ENCODE measurements at regions of chr10 and their contacts with region 1.

Region 1: GRCh38 chr10:78972947-78973900 is 95.5 kb upstream of the ZMIZ1 start:
- DNase-seq: peak; percentile 93
- H3K4me3 Mint-ChIP-seq: peak overlapping the region; percentile 78
- H3K27ac Mint-ChIP-seq: peak overlapping the region; percentile 51
- H3K4me1 Mint-ChIP-seq: peaks cover 36% of the 10 kb centered on the region
- H3K27me3 Mint-ChIP-seq: no peaks in the 10 kb centered on the region
- CTCF ChIP-seq: no peak

Region 2: GRCh38 chr10:78756604-78757349 is 216.4 kb before region 1 on chr10:
- CTCF ChIA-PET with region 1: interaction called, 3 read pairs
- POLR2A ChIA-PET with region 1: no interaction called
- intact Hi-C with region 1: loop called (anchors 1 kb)
- DNase-seq: peak; percentile 98
- H3K4me3 Mint-ChIP-seq: peak overlapping the region; percentile 41
- H3K27ac Mint-ChIP-seq: peak overlapping the region; percentile 74
- H3K4me1 Mint-ChIP-seq: peaks cover 26% of the 10 kb centered on the region
- H3K27me3 Mint-ChIP-seq: peaks cover 26% of the 10 kb centered on the region
- CTCF ChIP-seq: no peak

Region 3: DNA sequence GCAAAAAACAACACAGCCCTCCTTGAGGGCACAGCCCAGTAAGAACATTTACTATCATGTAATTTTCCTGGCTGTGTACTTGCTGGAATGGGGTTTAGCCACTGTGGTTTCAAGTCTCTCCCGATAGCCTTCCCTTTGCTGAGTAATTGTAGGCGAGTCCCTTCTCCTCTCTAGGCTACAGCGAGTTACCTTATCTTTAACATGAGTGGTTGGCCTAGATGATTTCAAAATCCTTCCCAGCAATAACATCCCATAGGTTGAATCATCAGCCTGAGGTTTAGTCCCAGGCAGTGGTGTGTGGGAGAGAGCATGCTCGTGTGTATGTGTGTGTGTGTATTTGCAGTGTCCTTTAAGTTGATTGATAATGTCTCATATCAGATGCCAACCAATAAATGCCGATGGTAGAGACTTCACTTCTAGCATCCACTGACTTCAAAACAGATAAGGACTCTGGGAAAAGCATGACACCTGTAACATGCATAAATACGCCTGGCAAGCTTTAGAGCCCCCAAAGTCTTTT is 47.4 kb before region 1 on chr10:
- CTCF ChIA-PET with region 1: interaction called, 3 read pairs
- POLR2A ChIA-PET with region 1: no interaction called
- intact Hi-C with region 1: loop called (anchors 2 kb)
- DNase-seq: peak; percentile 94
- H3K4me3 Mint-ChIP-seq: no peak overlapping the region
- H3K27ac Mint-ChIP-seq: peak overlapping the region; percentile 42
- H3K4me1 Mint-ChIP-seq: peaks cover 19% of the 10 kb centered on the region
- H3K27me3 Mint-ChIP-seq: no peaks in the 10 kb centered on the region
- CTCF ChIP-seq: no peak

Region 4: DNA sequence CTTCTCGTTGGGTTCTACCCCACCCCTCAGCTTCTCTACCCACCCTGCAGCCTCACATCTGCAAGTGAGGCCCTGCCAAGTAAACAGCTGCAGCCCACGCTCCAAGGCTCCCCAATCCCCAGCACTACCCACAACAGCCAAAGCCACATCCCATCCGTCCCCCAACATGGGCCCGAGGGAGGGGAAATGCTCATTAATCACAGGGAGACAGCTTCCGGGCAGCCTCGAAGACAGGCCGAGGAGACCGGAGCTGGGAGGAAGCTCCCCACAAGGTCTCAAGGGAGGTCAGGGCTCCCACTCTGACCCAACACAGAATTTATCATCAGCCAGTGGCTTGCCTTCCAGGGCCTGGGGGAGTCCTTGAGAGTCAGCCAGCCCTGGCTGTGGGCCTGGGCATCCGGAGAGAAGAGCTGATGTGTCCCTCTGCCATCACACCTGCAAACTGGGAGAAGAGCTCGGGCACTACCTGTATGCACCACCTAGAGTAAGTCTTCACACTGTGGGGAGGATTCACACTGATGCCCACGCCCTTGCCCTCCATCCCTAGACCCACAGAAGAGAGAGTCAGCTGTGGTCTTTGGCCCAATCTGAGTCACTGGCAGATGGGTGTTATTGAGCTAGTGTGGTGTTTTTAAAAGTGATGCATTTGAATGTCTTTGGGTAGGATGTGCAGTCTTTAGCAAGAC is 20.0 kb before region 1 on chr10:
- CTCF ChIA-PET with region 1: interaction called, 12 read pairs
- POLR2A ChIA-PET with region 1: interaction called, 13 read pairs
- intact Hi-C with region 1: no loop called
- DNase-seq: no peak
- H3K4me3 Mint-ChIP-seq: no peak overlapping the region
- H3K27ac Mint-ChIP-seq: no peak overlapping the region
- H3K4me1 Mint-ChIP-seq: peaks cover 39% of the 10 kb centered on the region
- H3K27me3 Mint-ChIP-seq: no peaks in the 10 kb centered on the region
- CTCF ChIP-seq: no peak